ENCODE measurements at regions of chr6 and their contacts with region 1.

Region 1: GRCh38 chr6:44475779-44476434 is 88.4 kb downstream of the CDC5L start:
- DNase-seq: peak; percentile 65
- ATAC-seq: peak; percentile 98
- H3K4me3 ChIP-seq: no peak overlapping the region
- H3K27ac ChIP-seq: no peak overlapping the region
- H3K4me1 ChIP-seq: peaks cover 2% of the 10 kb centered on the region; the same call in 1 of the 2 replicates
- H3K27me3 ChIP-seq: peaks cover 40% of the 10 kb centered on the region
- CTCF ChIP-seq: peak; percentile 93
- POLR2A ChIP-seq: peak; percentile 57; the same call in 1 of the 2 replicates
- RAD21 ChIP-seq: peak; percentile 97

Region 2: DNA sequence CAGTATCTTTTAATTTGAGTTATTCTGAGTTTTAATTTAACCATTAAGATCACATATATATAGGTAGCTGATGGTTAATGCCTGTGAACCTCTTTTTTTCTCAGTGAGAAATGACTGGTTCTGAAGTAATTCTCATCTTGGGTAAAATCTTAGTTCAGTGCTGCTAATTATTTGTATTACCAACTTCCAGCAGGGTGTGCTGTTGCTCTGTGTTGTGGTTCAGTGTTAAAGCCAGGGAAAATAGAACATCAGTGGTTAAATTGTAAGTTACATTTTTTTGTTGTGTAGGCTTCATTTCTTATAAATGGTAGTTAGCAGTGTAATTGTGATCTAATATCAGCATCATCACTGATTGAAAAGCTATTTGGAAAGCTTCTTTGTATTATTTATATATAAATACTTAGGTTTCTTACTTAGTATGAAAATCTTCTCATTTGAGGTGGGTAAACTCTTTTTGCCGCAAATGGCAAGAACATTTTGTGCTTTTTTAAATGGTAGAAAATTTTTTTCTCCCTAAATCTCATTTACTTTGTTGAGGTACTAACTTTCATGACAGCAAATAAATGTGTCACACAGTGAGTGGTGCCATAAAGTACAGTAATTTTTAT is 44.7 kb before region 1 on chr6:
- CTCF ChIA-PET with region 1: interaction called, 4 read pairs
- POLR2A ChIA-PET with region 1: no interaction called
- dilution Hi-C with region 1: no loop called
- in situ Hi-C with region 1: no loop called
- intact Hi-C with region 1: loop called (anchors 1 kb)
- DNase-seq: peak; percentile 73
- ATAC-seq: peak; percentile 76
- H3K4me3 ChIP-seq: no peak overlapping the region
- H3K27ac ChIP-seq: no peak overlapping the region
- H3K4me1 ChIP-seq: peaks cover 2% of the 10 kb centered on the region; the same call in 1 of the 2 replicates
- H3K27me3 ChIP-seq: no peaks in the 10 kb centered on the region
- CTCF ChIP-seq: peak; percentile 85
- POLR2A ChIP-seq: no peak
- RAD21 ChIP-seq: peak; percentile 88

Region 3: GRCh38 chr6:44593539-44593944 is 117.6 kb after region 1 on chr6:
- CTCF ChIA-PET with region 1: interaction called, 4 read pairs
- POLR2A ChIA-PET with region 1: no interaction called
- dilution Hi-C with region 1: no loop called
- in situ Hi-C with region 1: no loop called
- intact Hi-C with region 1: loop called (anchors 5 kb)
- DNase-seq: peak; percentile 58
- ATAC-seq: peak; percentile 81
- H3K4me3 ChIP-seq: no peak overlapping the region
- H3K27ac ChIP-seq: no peak overlapping the region
- H3K4me1 ChIP-seq: no peaks in the 10 kb centered on the region
- H3K27me3 ChIP-seq: peaks cover 28% of the 10 kb centered on the region
- CTCF ChIP-seq: peak; percentile 54
- POLR2A ChIP-seq: no peak
- RAD21 ChIP-seq: peak; percentile 59

Region 4: GRCh38 chr6:44642870-44643529 is 167.1 kb after region 1 on chr6:
- CTCF ChIA-PET with region 1: interaction called, 9 read pairs
- POLR2A ChIA-PET with region 1: no interaction called
- dilution Hi-C with region 1: no loop called
- in situ Hi-C with region 1: loop called (anchors 10 kb)
- intact Hi-C with region 1: no loop called
- DNase-seq: peak; percentile 18
- ATAC-seq: no peak
- H3K4me3 ChIP-seq: no peak overlapping the region
- H3K27ac ChIP-seq: no peak overlapping the region
- H3K4me1 ChIP-seq: no peaks in the 10 kb centered on the region
- H3K27me3 ChIP-seq: peaks cover 9% of the 10 kb centered on the region
- CTCF ChIP-seq: no peak
- POLR2A ChIP-seq: no peak
- RAD21 ChIP-seq: no peak

Region 5: DNA sequence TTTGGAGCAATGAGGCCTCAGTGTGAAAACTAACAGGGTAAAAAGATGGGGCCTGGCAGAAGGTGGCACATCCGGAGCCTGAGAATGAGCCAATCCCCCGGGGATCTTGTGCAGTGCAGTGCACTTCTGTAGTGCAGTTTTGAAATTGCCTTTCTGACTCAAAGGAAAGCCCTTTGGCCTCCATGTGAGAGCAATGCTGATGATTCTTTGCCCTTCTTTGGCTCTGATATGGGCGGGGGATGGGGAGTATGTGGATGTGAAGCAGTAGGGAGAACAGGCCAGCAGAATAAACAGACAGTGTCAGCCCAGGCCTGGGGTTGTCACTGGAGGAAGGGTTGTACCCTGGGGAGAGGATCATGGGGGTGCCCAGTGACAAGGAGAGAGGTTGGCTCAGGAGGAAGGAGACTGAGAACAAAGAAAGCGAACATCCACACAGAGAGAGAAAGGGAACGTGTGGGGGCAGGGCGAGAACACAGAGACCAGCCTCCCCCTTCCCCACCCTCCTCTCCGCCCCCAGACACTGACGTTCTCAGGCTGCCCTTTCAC is 262.8 kb after region 1 on chr6:
- CTCF ChIA-PET with region 1: no interaction called
- POLR2A ChIA-PET with region 1: no interaction called
- dilution Hi-C with region 1: no loop called
- in situ Hi-C with region 1: no loop called
- intact Hi-C with region 1: no loop called
- DNase-seq: peak; percentile 16
- ATAC-seq: peak; percentile 84
- H3K4me3 ChIP-seq: no peak overlapping the region
- H3K27ac ChIP-seq: no peak overlapping the region
- H3K4me1 ChIP-seq: peaks cover 10% of the 10 kb centered on the region
- H3K27me3 ChIP-seq: peaks cover 32% of the 10 kb centered on the region
- CTCF ChIP-seq: no peak
- POLR2A ChIP-seq: no peak
- RAD21 ChIP-seq: no peak

Region 6: DNA sequence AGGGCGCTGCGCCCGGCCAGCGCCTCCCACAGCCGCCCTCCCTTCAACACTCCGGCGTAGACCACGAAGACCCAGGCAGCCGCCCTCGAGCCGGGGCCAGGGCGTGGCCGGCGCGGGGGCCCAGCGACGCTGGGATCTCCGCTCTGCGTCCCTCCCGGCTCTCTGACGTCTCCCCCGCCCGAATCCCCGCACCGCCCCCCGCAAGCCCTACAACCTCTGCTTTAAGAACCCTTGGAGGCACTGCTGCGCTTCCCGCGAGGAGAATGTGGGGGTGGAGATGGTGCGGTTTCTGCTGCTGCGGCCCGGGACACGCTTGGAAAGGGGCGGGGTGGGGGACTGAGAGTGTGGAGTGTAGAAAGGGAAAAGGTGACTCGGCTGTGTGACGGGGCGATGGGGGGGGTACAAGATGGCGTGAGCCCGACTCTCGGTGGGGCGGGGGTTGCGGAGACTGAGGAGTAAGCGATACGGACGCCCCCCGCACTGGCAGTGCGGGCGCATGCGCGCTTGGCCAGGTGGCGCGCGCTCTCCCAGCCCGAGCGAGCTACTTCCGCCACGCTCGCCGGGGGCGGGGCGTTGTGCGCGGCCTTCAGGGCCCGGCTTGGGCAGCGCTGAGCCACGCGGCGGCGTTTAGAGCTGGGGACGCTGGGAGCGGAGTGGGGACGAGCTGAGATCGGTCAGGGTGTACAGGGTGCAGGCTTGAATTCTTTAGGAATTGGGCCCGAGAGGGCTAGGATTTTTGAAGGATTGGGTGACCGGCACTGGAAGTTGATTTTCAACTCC is 901.8 kb after region 1 on chr6 and contains the start of gene SUPT3H:
- CTCF ChIA-PET with region 1: interaction called, 5 read pairs
- POLR2A ChIA-PET with region 1: no interaction called
- dilution Hi-C with region 1: no loop called
- in situ Hi-C with region 1: no loop called
- intact Hi-C with region 1: loop called (anchors 5 kb)
- DNase-seq: peak; percentile 93
- ATAC-seq: peak; percentile 94
- H3K4me3 ChIP-seq: peak within 1 kb of the TSS; percentile 66
- H3K27ac ChIP-seq: peak within 1 kb of the TSS; percentile 95
- H3K4me1 ChIP-seq: no peaks in the 10 kb centered on the region
- H3K27me3 ChIP-seq: no peaks in the 10 kb centered on the region
- CTCF ChIP-seq: peak; percentile 27; the same call in 1 of the 2 replicates
- POLR2A ChIP-seq: peak; percentile 93
- RAD21 ChIP-seq: peak; percentile 41
- total RNA-seq, gene SUPT3H: 4.2 and 5.0 TPM in 2 replicates

Region 7: DNA sequence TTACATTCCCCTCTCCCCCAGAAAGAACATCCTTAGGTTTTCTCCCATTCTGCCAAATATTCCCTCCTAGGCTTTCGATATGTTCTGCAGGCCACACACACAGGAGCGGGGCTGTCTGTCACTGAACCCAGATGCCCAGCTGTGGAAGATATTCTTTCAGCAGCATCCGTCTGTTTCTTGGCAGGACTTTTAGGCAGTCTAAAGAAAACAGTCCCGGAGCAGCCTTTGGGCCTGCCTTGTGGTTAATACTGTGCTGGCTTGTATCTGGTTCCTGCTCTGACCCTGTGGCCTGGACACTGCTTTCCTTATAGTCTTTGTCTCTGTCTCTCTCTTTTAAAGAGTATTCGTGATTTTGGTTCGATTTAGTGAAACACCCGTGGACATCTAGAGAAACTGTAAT is 996.5 kb after region 1 on chr6:
- CTCF ChIA-PET with region 1: no interaction called
- POLR2A ChIA-PET with region 1: no interaction called
- dilution Hi-C with region 1: no loop called
- in situ Hi-C with region 1: no loop called
- intact Hi-C with region 1: no loop called
- DNase-seq: peak; percentile 51
- ATAC-seq: peak; percentile 88
- H3K4me3 ChIP-seq: no peak overlapping the region
- H3K27ac ChIP-seq: peak overlapping the region; percentile 2
- H3K4me1 ChIP-seq: peaks cover 3% of the 10 kb centered on the region
- H3K27me3 ChIP-seq: no peaks in the 10 kb centered on the region
- CTCF ChIP-seq: no peak
- POLR2A ChIP-seq: no peak
- RAD21 ChIP-seq: no peak